Right cardiac atrium (tissue), 5 donors: ENCODE measurements at regions of chr10 and their contacts with region 1.

Region 1: DNA sequence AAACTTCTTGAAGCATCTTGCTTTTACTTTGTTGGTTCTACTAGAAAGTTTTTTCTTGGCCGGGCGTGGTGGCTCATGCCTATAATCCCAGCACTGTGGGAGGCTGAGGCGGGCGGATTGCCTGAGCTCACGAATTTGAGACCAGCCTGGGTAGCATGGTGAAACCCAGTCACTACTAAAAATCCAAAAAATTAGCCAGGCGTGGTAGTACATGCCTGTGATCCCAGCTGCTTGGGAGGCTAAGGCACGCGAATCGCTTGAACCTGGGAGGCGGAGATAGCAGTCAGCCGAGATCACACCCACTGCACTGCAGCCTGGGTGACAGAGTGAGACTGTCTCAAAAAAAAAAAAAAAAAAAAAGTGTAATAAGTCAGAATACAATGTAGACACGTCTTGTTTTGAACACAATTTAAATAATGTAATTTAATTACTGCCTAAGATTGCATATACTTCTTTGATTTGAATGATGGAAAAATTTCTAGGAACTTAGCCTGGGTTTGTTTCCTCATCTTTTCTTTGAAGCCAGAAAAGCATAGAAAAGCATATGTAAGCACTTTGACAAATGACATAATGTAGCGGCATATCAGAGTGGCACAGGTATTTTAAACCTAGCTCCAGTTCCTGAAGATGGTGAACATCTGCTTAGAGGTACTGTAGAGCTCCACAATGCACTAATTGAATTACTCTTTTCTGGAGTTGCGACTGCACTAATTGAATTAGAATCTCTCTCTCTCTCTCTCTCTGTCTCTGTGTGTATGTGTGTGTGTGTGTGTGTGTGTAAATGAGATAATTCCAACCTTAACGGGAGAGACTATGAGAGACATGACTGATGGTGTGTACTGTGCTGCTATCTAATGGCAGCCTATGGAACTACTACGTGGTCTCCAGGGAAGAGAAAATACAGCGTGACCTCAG is 87.8 kb downstream of the BTRC start:
- DNase-seq: peak in 2 of 3 donors; percentile 12 to 40
- ATAC-seq: peak; percentile 88 to 90
- H3K4me3 ChIP-seq: no peak overlapping the region
- H3K27ac ChIP-seq: no peak overlapping the region
- H3K4me1 ChIP-seq: peaks cover 2% of the 10 kb centered on the region
- H3K27me3 ChIP-seq: no peaks in the 10 kb centered on the region

Region 2: GRCh38 chr10:101287997-101288635 is 153.7 kb before region 1 on chr10:
- intact Hi-C with region 1: loop called in 2 of 4 experiments (anchors 10 kb)
- DNase-seq: no peak
- ATAC-seq: no peak
- H3K4me3 ChIP-seq: no peak overlapping the region
- H3K27ac ChIP-seq: no peak overlapping the region
- H3K4me1 ChIP-seq: no peaks in the 10 kb centered on the region
- H3K27me3 ChIP-seq: no peaks in the 10 kb centered on the region